ENCODE measurements at regions of chr1 and their contacts with region 1.

Region 1: DNA sequence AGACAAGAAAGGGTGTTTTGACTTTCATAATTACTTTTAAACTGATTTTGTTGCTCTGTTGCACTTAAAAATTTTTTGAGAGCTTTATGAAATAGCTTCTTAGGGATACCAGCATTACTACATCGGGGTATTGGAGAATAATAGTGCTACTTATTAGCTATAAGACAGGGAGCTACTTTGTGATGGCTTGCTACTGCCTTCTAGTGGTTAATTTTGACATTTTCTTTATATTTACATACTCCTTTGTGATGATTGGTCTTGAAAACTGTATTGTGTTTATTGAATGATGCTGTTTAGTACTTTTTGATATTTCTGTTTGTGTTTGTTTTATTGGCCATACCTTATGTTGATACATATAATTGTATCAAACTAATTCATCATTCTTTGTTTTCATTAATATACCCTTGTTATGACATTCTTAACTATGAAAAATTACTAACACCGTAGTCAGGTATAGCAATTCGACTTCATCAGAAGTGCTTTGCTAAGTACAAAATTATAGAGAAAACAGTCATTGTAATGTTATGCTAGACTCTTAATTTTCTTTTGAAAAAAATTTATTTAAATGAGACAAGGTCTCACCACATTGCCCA is 85.5 kb downstream of the CLIC4 start:
- DNase-seq: peak in 1 of 2 donors; percentile 88
- H3K4me3 ChIP-seq: no peak overlapping the region
- H3K27ac ChIP-seq: peak overlapping the region in 1 of 5 donors; percentile 41
- H3K4me1 ChIP-seq: peaks cover 6 to 65% (median 32%) of the 10 kb centered on the region in 4 donors
- H3K27me3 ChIP-seq: no peaks in the 10 kb centered on the region
- CTCF ChIP-seq: peak in 5 of 7 experiments; percentile 27 to 82 (median 67)
- EP300 ChIP-seq: no peak
- POLR2A ChIP-seq: no peak

Region 2: DNA sequence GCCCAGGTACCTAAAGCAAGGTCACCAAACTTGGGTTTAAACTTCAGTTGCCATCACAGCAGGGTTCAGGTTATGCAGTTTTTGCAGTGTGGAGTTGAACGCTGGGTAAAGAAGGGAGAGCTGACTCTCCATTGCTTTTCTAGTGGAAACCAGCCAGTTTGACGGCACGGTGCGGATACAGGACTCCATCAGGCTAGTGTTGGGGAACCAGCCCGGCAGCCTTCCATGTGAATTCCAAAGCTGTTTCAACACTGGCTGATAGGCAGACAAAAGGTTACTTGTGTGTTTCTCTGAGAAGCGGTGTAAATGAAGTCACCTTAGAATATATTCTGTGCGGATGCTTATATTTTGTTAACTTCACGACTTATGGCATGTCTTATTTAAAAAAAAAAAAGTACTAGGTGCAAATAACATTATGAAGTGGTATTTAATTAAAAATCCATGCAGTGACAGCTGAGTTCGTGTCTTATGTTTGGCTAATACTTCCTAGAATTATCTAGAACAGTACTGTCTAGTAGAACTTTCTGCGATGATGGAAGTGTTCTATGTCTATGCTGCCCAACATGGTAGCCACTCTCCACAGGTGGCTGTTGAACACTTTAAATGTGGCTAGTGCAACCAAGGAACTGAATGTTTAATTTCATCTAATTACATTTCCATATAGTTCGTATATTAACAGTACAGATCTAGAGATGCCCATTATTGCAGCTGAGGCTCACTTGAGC is 358.1 kb before region 1 on chr1:
- intact Hi-C with region 1: no loop called
- DNase-seq: peak; percentile 43 to 88
- H3K4me3 ChIP-seq: no peak overlapping the region
- H3K27ac ChIP-seq: no peak overlapping the region
- H3K4me1 ChIP-seq: no peaks in the 10 kb centered on the region
- H3K27me3 ChIP-seq: no peaks in the 10 kb centered on the region
- CTCF ChIP-seq: no peak
- EP300 ChIP-seq: no peak
- POLR2A ChIP-seq: no peak

Region 3: GRCh38 chr1:24688621-24689195 is 142.1 kb before region 1 on chr1:
- intact Hi-C with region 1: loop called (anchors 5 kb)
- DNase-seq: peak; percentile 79 to 88
- H3K4me3 ChIP-seq: no peak overlapping the region
- H3K27ac ChIP-seq: no peak overlapping the region
- H3K4me1 ChIP-seq: peaks cover under 1 to 15% (median 6%) of the 10 kb centered on the region in 4 donors
- H3K27me3 ChIP-seq: no peaks in the 10 kb centered on the region
- CTCF ChIP-seq: peak in 5 of 7 experiments; percentile 57 to 90 (median 83)
- EP300 ChIP-seq: no peak
- POLR2A ChIP-seq: no peak

Region 4: DNA sequence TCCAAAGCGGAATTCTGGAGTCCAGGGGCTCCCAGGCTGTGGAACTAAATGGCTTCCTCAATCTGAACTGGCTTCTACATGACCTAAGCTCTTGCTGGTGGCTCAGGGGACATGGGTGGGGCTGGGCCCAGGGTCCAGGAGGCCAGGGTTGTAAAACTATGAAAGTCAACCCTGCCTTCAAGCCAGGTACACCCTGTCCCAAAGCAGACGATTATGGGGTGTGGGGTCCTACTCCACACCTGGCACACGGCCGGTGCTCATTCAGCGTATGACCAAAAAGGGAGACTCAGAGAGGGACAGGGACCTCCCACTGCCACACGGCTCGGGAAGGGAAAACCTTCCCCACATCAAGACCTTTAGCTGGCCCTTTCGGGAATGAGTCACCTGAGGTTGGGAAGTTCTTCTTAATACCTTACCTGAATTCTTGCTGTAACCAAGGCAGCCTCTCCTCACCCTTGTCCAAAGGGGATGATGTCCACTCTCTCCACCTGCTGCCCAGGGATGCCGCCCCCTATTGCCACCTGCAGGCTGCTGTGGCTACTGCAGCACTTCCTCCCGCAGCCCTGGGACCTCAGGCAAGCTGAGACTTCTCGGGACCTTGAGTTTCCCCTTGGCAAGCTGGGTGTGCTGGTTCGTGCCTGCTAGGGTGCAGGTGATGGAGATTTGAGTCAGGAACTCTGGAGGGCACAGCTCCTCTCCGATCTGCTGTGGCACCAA is 67.1 kb after region 1 on chr1:
- intact Hi-C with region 1: no loop called
- DNase-seq: peak; percentile 65 to 81
- H3K4me3 ChIP-seq: no peak overlapping the region
- H3K27ac ChIP-seq: no peak overlapping the region
- H3K4me1 ChIP-seq: peaks cover 0 to 10% (median 2%) of the 10 kb centered on the region in 4 donors
- H3K27me3 ChIP-seq: peaks cover 0 to 36% (median 6%) of the 10 kb centered on the region in 3 donors
- CTCF ChIP-seq: peak in 5 of 7 experiments; percentile 46 to 78 (median 59)
- EP300 ChIP-seq: no peak
- POLR2A ChIP-seq: no peak